PC-3 (cell line): ENCODE measurements at regions of chr3 and their contacts with region 1.

Region 1: DNA sequence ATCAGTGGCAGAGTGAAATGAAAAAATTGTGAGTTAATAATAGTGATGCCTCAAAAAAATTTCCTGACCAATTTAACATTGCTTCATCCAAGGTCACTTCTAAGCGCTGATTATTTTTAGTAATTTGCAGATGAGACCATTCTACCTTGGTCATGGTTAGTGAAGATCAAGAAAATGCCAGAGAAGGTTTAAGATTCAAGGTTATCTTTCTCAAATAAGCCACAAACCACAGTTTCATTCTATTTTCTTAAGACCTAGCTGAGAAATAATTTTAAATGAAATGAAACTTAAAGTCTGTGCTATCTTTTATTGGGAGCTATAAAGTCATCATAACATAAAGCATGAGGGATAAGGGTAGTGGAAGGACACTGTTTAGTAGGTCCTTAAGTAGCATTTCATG is 353.9 kb upstream of the NAALADL2 start:
- DNase-seq: no peak
- ATAC-seq: no peak
- H3K4me3 ChIP-seq: no peak overlapping the region
- H3K27ac ChIP-seq: no peak overlapping the region
- H3K4me1 ChIP-seq: no peaks in the 10 kb centered on the region
- H3K27me3 ChIP-seq: no peaks in the 10 kb centered on the region
- CTCF ChIP-seq: no peak

Region 2: DNA sequence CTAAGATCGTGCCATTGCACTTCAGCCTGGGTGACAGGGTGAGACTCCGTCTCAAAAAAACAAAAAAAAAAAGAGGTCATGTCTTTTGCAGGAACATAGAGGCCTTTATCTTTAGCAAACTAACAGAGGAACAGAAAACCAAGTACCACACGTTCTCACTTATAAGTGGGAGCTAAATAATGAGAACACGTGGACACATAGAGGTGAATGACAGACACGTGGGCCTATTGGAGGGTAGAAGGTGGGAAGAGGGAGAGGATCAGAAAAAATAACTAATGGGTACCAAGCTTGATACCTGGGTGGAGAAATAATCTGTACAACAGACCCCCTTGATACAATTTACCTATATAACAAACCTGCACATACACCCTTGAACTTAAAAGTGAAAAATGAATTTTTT is 47.5 kb before region 1 on chr3:
- CTCF ChIA-PET with region 1: interaction called, 10 read pairs
- POLR2A ChIA-PET with region 1: no interaction called
- intact Hi-C with region 1: no loop called
- DNase-seq: no peak
- ATAC-seq: no peak
- H3K4me3 ChIP-seq: no peak overlapping the region
- H3K27ac ChIP-seq: no peak overlapping the region
- H3K4me1 ChIP-seq: no peaks in the 10 kb centered on the region
- H3K27me3 ChIP-seq: no peaks in the 10 kb centered on the region
- CTCF ChIP-seq: no peak